ENCODE measurements at regions of chr11 and their contacts with region 1.

Region 1: DNA sequence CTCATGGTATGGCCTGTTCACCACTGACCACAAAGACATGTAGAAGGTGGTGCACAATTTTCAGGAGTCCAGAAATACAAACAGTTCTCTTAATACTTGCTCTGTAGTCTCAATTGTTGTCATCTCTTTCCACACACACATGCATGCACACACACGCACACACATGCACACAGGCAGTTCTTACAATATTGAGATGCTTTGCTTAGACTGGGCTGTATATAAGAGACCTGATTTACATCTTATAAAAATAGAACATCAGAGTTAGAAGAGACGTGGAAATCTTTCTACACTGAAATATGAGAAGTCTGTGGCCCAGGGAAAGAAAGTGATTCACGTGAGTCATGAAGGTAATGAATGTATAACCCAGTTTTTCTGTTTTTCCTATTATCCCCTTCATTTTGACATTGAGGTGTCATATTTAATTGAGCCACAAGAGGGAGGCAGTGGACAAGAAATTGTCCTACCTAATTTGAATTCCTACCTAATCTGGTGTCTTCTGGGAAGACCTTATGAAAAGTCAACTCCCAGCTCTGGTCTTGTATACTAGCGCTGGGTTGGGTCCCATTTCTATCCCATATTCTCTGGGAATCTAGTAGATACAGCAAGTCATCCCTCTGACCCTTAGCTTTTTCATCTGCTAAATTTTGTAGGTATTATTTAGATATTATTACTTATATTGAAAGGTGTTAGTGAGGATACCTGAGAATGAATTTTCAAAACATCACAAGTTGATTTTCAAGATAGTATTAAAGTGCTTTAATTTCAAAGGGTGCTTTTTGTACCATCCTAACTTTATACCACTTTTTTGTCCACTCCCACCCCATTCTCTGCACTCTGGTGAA is 14.9 kb upstream of the MS4A4A start:
- DNase-seq: peak; percentile 22
- H3K4me3 ChIP-seq: no peak overlapping the region
- H3K27ac ChIP-seq: no peak overlapping the region
- H3K4me1 ChIP-seq: no peaks in the 10 kb centered on the region
- H3K27me3 ChIP-seq: peaks cover 11% of the 10 kb centered on the region; the same call in 1 of the 2 replicates
- CTCF ChIP-seq: peak; percentile 79
- EP300 ChIP-seq: no peak
- RAD21 ChIP-seq: peak; percentile 72

Region 2: GRCh38 chr11:60251485-60252212 is 13.9 kb before region 1 on chr11:
- CTCF ChIA-PET with region 1: interaction called, 13 read pairs
- POLR2A ChIA-PET with region 1: no interaction called
- DNase-seq: peak; percentile 2
- H3K4me3 ChIP-seq: no peak overlapping the region
- H3K27ac ChIP-seq: no peak overlapping the region
- H3K4me1 ChIP-seq: no peaks in the 10 kb centered on the region
- H3K27me3 ChIP-seq: no peaks in the 10 kb centered on the region; the same call in 1 of the 2 replicates
- CTCF ChIP-seq: peak; percentile 58
- EP300 ChIP-seq: no peak
- RAD21 ChIP-seq: peak; percentile 45; the same call in 1 of the 2 replicates